ENCODE measurements at regions of chr1 and their contacts with region 1.

Region 1: GRCh38 chr1:67053785-67054772 is at the start of gene SLC35D1:
- DNase-seq: peak; percentile 82
- ATAC-seq: peak; percentile 85
- H3K4me3 Mint-ChIP-seq: peak within 1 kb of the TSS; percentile 92
- H3K27ac Mint-ChIP-seq: peak within 1 kb of the TSS; percentile 92
- H3K4me1 Mint-ChIP-seq: peaks cover 21% of the 10 kb centered on the region
- H3K27me3 Mint-ChIP-seq: no peaks in the 10 kb centered on the region
- CTCF ChIP-seq: no peak
- total RNA-seq, gene SLC35D1: 10.1 and 11.1 TPM in 2 replicates

Region 2: GRCh38 chr1:66929999-66930822 is 123.9 kb before region 1 on chr1:
- CTCF ChIA-PET with region 1: no interaction called
- POLR2A ChIA-PET with region 1: interaction called, 8 read pairs
- intact Hi-C with region 1: loop called (anchors 1 kb)
- DNase-seq: peak; percentile 98
- ATAC-seq: peak; percentile 78
- H3K4me3 Mint-ChIP-seq: peak overlapping the region; percentile 94
- H3K27ac Mint-ChIP-seq: peak overlapping the region; percentile 93
- H3K4me1 Mint-ChIP-seq: peaks cover 57% of the 10 kb centered on the region
- H3K27me3 Mint-ChIP-seq: no peaks in the 10 kb centered on the region
- CTCF ChIP-seq: no peak

Region 3: DNA sequence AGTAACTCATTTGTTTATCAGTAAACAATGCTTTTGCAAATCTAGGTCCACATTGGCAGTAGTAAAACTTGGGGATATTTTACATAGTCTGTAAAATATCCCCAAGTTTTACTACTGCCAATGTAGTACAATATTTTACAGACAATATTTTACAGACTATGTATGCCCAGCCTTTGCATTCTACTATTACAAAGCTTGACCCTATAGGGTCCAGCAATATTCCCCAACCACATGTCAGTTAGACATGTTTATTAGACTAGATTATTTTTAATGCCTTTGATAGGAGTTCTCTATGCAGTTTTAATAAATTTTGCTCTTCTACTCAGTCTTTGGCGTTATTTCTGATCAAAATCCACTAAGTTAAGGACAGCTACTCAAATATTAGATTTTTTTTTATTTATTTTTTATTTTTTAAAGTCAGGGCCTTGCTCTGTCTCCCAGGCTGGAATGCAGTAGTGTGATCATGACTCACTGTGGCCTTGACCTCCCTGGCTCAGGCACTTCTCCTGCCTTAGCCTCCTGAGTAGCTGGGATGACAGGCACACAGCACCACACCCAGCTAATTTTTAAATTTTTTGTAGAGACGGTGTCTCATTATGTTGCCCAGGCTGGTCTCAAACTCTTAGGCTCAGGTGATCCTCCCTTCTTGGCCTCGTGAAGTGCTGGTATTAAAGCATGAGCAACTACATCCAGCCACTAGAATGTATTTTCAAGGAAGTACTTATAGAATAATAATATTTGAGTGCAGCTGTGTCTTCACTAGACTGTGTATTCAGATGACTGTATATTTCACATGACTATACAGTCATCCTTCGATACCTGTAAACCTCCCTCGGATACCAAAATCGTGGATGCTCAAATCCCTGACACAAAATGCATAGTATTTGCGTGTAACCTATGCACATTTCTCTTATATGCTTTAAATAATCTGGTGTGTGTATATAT is 109.5 kb before region 1 on chr1:
- CTCF ChIA-PET with region 1: no interaction called
- POLR2A ChIA-PET with region 1: no interaction called
- intact Hi-C with region 1: no loop called
- DNase-seq: no peak
- ATAC-seq: no peak
- H3K4me3 Mint-ChIP-seq: no peak overlapping the region
- H3K27ac Mint-ChIP-seq: no peak overlapping the region
- H3K4me1 Mint-ChIP-seq: peaks cover 7% of the 10 kb centered on the region
- H3K27me3 Mint-ChIP-seq: no peaks in the 10 kb centered on the region
- CTCF ChIP-seq: no peak

Region 4: GRCh38 chr1:67110352-67110751 is 56.3 kb after region 1 on chr1:
- CTCF ChIA-PET with region 1: no interaction called
- POLR2A ChIA-PET with region 1: interaction called, 14 read pairs
- intact Hi-C with region 1: loop called (anchors 1 kb)
- DNase-seq: no peak
- ATAC-seq: peak; percentile 60
- H3K4me3 Mint-ChIP-seq: peak overlapping the region; percentile 58
- H3K27ac Mint-ChIP-seq: peak overlapping the region; percentile 76
- H3K4me1 Mint-ChIP-seq: peaks cover 41% of the 10 kb centered on the region
- H3K27me3 Mint-ChIP-seq: no peaks in the 10 kb centered on the region
- CTCF ChIP-seq: no peak

Region 5: GRCh38 chr1:67214420-67215174 is 160.5 kb after region 1 on chr1:
- CTCF ChIA-PET with region 1: interaction called, 4 read pairs
- POLR2A ChIA-PET with region 1: no interaction called
- intact Hi-C with region 1: loop called (anchors 5 kb)
- DNase-seq: no peak
- ATAC-seq: peak; percentile 62
- H3K4me3 Mint-ChIP-seq: no peak overlapping the region
- H3K27ac Mint-ChIP-seq: no peak overlapping the region
- H3K4me1 Mint-ChIP-seq: peaks cover 9% of the 10 kb centered on the region
- H3K27me3 Mint-ChIP-seq: no peaks in the 10 kb centered on the region
- CTCF ChIP-seq: no peak